ENCODE measurements at regions of chr18 and their contacts with region 1.

Region 1: GRCh38 chr18:58768293-58768974 is 96.2 kb upstream of the ZNF532 start:
- DNase-seq: no peak
- H3K4me3 ChIP-seq: no peak overlapping the region
- H3K27me3 ChIP-seq: peaks cover 6% of the 10 kb centered on the region
- CTCF ChIP-seq: peak; percentile 92

Region 2: DNA sequence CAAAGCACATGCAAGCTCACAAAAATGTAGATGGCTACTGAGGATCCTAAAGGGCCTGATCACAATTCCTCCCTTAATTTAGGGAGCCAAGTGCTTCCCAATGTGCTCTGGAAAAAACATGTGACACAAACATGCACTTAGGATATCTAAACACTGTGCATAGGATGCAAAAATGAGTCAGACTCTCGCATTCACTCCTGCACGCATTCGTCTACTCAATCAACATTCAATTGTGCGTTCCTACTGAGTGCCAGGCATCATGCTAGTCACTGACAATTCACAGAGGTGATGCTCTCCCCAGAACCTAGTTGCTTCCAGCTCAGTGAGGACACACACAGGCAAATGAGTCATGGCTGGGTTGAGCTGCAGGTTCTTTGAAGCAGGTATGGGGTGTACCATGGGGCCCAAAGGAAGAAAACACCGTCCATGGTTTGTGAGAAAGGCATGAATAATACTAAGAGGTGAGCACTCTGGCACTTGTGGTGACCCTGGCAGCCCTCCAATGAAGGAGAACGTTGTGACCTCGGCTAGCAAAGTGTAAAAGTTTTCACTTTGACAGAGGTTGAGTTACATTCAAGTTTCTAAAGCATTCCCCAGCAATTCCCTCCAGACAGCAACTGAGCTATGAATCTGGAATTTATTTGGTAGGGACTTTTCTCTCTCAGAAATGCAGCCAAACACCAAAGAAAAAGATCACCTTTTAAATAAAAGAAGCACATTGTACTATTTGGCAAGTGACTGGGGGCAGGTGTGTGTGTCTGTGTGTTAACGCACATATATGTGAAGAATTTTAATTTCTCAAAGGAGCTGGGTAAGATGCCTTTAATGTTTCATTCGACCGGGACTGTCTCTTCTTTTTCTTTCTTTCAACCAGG is 312.9 kb before region 1 on chr18:
- CTCF ChIA-PET with region 1: no interaction called
- POLR2A ChIA-PET with region 1: no interaction called
- DNase-seq: no peak
- H3K4me3 ChIP-seq: no peak overlapping the region
- H3K27me3 ChIP-seq: peaks cover 4% of the 10 kb centered on the region
- CTCF ChIP-seq: no peak

Region 3: GRCh38 chr18:58493516-58494253 is 274.7 kb before region 1 on chr18:
- CTCF ChIA-PET with region 1: interaction called, 21 read pairs
- POLR2A ChIA-PET with region 1: no interaction called
- DNase-seq: peak; percentile 25
- H3K4me3 ChIP-seq: no peak overlapping the region
- H3K27me3 ChIP-seq: no peaks in the 10 kb centered on the region
- CTCF ChIP-seq: peak; percentile 85

Region 4: DNA sequence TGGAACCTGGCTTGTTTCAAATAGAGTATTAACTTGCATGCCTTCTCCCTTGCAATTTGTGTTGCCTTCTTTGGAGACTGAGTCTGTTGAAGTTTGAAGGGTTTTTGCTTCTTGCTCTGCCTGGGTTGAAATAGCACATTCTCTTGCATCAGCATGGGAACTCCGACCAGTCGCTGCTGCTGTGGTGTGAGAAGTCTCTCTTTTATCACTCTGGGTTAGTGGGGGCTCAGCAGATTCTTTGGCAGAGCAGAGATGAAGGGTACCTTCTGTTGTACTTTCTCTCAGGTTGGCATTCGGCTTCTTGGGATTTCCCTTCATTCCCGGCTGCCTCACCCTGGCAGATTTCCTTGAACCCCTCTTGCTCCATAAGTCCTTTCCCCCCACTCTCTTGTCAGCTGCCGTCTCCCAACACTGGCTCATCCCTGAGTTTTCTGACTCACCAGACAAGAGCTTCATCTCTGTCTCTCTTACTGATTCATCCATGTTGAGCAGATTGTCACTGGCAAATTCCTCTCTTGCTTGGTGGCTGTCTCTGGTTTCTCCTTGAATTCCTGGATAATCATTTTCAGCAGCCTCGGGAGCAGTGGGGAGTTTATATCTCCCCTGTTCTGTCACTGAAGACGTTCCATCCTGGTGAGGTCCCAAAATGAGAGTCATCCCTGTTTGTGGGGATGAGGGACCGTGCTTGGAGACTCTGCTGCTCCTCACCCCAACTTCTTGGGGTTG is 189.4 kb before region 1 on chr18:
- CTCF ChIA-PET with region 1: interaction called, 11 read pairs
- POLR2A ChIA-PET with region 1: no interaction called
- DNase-seq: peak; percentile 68
- H3K4me3 ChIP-seq: peak overlapping the region; percentile 57
- H3K27me3 ChIP-seq: no peaks in the 10 kb centered on the region
- CTCF ChIP-seq: no peak

Region 5: GRCh38 chr18:58754544-58755068 is 13.8 kb before region 1 on chr18:
- CTCF ChIA-PET with region 1: interaction called, 36 read pairs
- POLR2A ChIA-PET with region 1: no interaction called
- DNase-seq: no peak
- H3K4me3 ChIP-seq: no peak overlapping the region
- H3K27me3 ChIP-seq: no peaks in the 10 kb centered on the region
- CTCF ChIP-seq: no peak

Region 6: GRCh38 chr18:59070181-59070912 is 301.9 kb after region 1 on chr18:
- CTCF ChIA-PET with region 1: interaction called, 703 read pairs
- POLR2A ChIA-PET with region 1: no interaction called
- DNase-seq: no peak
- H3K4me3 ChIP-seq: no peak overlapping the region
- H3K27me3 ChIP-seq: no peaks in the 10 kb centered on the region
- CTCF ChIP-seq: peak; percentile 89

Region 7: GRCh38 chr18:59085797-59086196 is 317.4 kb after region 1 on chr18:
- CTCF ChIA-PET with region 1: interaction called, 20 read pairs
- POLR2A ChIA-PET with region 1: no interaction called
- DNase-seq: no peak
- H3K4me3 ChIP-seq: no peak overlapping the region
- H3K27me3 ChIP-seq: peaks cover 1% of the 10 kb centered on the region
- CTCF ChIP-seq: no peak

Measured in BJ (cell line).